ENCODE measurements at regions of chr1 and their contacts with region 1.

Region 1: GRCh38 chr1:43073490-43074230 is 98.4 kb downstream of the EBNA1BP2 start:
- DNase-seq: peak; percentile 35 to 86 (median 74)
- ATAC-seq: peak; percentile 89
- H3K4me3 ChIP-seq: no peak overlapping the region
- H3K4me3 Mint-ChIP-seq: no peak overlapping the region
- H3K27ac ChIP-seq: no peak overlapping the region
- H3K27ac Mint-ChIP-seq: no peak overlapping the region
- H3K4me1 ChIP-seq: peaks cover 3% of the 10 kb centered on the region
- H3K4me1 Mint-ChIP-seq: peaks cover 8% of the 10 kb centered on the region
- H3K27me3 ChIP-seq: no peaks in the 10 kb centered on the region
- H3K27me3 Mint-ChIP-seq: no peaks in the 10 kb centered on the region
- CTCF ChIP-seq: peak; percentile 85

Region 2: GRCh38 chr1:42576935-42577334 is 496.7 kb before region 1 on chr1:
- CTCF ChIA-PET with region 1: interaction called, 6 read pairs
- POLR2A ChIA-PET with region 1: no interaction called
- intact Hi-C with region 1: loop called in 1 of 2 experiments (anchors 1 kb)
- DNase-seq: no peak
- ATAC-seq: no peak
- H3K4me3 ChIP-seq: no peak overlapping the region
- H3K4me3 Mint-ChIP-seq: no peak overlapping the region
- H3K27ac ChIP-seq: no peak overlapping the region
- H3K27ac Mint-ChIP-seq: no peak overlapping the region
- H3K4me1 ChIP-seq: no peaks in the 10 kb centered on the region
- H3K4me1 Mint-ChIP-seq: no peaks in the 10 kb centered on the region
- H3K27me3 ChIP-seq: no peaks in the 10 kb centered on the region
- H3K27me3 Mint-ChIP-seq: no peaks in the 10 kb centered on the region
- CTCF ChIP-seq: no peak

Region 3: DNA sequence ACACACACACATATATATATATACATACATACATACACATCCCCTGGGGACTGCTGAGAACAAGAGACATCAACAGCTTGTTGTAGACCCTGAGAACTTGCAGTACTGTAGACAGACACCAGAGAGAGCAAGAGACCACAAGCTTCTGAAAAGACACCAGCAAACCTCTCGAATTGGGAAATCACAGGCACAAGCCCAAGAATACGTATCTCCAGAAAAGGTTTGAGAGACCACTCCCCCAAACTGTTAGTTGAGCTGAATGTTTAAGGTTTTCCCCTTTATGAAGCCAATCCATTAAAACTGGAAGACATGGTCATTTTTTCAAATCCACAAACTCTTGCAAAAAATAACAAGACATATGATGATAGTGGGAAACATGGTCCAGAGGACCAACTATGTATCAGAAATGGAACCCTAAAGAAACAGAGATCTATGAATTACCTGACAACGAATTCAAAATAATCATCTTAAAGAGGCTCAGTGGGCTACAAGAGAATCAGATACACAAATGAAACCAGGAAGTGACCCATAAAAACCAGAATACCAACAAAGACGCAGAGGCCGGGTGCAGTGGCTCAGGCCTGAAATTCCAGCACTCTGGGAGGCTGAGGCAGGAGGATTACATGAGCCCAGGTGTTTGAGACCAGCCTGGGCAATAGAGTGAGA is 160.1 kb before region 1 on chr1:
- CTCF ChIA-PET with region 1: interaction called, 784 read pairs
- POLR2A ChIA-PET with region 1: interaction called, 29 read pairs
- intact Hi-C with region 1: loop called (anchors 1 kb)
- DNase-seq: peak in 6 of 9 experiments; percentile 45 to 87 (median 64)
- ATAC-seq: peak; percentile 99
- H3K4me3 ChIP-seq: no peak overlapping the region
- H3K4me3 Mint-ChIP-seq: no peak overlapping the region
- H3K27ac ChIP-seq: no peak overlapping the region
- H3K27ac Mint-ChIP-seq: no peak overlapping the region
- H3K4me1 ChIP-seq: no peaks in the 10 kb centered on the region
- H3K4me1 Mint-ChIP-seq: peaks cover 4% of the 10 kb centered on the region
- H3K27me3 ChIP-seq: no peaks in the 10 kb centered on the region
- H3K27me3 Mint-ChIP-seq: peaks cover 3% of the 10 kb centered on the region
- CTCF ChIP-seq: peak; percentile 85

Region 4: DNA sequence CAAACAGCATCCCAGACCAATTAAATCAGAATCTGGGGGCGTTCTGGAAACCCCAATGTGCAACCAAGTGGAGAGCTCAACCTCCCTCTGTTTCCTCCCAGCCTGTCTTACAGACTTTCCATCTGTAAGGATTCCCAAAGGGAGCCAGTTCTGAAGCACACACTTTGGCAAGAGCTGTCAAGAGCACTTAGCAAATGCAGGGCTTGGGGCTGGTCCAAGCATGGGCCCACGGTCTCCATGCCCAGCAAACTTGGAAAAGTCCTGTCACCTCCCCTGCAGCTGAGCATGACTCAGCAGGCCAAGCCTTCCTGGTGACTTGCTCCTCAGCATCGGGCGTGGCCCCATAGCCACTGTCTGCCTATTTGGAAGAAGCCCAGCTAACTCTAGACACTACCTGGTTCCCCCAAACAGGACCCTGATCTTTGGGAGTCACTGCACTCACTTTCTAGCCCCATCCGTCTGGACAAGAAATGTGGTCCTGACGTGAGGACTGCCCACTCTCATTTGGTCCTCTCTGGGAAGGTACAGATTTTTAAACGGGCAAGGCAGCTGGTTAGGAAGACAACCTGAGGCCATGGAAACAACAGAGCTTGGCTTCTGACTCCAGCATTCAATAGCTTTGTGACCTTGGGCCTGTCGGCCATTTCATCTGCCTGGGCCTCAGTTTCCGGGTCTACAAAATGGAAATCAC is 131.9 kb before region 1 on chr1:
- CTCF ChIA-PET with region 1: interaction called, 16 read pairs
- POLR2A ChIA-PET with region 1: interaction called, 5 read pairs
- intact Hi-C with region 1: no loop called
- DNase-seq: no peak
- ATAC-seq: no peak
- H3K4me3 ChIP-seq: no peak overlapping the region
- H3K4me3 Mint-ChIP-seq: no peak overlapping the region
- H3K27ac ChIP-seq: peak overlapping the region in 1 of 2 experiments; percentile 69
- H3K27ac Mint-ChIP-seq: peak overlapping the region; percentile 86
- H3K4me1 ChIP-seq: peaks cover 78% of the 10 kb centered on the region
- H3K4me1 Mint-ChIP-seq: peaks cover 95% of the 10 kb centered on the region
- H3K27me3 ChIP-seq: no peaks in the 10 kb centered on the region
- H3K27me3 Mint-ChIP-seq: no peaks in the 10 kb centered on the region
- CTCF ChIP-seq: no peak

Region 5: DNA sequence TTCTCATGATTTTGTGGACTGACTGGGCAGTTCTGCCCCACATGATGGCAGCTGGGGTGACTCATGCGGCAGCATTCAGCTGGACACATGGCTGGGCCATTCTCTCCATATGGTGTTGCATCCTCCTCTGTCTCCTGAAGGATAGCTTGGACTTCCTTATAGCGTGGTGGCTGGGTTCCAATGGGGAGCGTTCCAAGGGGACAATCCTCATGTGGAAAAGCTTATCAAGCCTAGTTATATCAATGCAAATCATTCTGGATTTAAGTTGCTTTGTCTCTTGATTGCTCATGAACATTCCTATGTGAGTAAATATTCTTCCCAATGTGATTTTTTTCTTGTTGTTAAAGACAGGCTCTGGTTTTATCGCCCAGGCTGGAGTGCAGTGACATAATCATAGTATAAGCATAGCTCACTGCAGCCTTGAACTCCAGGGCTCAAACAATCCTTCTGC is 101.8 kb before region 1 on chr1:
- CTCF ChIA-PET with region 1: interaction called, 12 read pairs
- POLR2A ChIA-PET with region 1: no interaction called
- intact Hi-C with region 1: no loop called
- DNase-seq: no peak
- ATAC-seq: no peak
- H3K4me3 ChIP-seq: no peak overlapping the region
- H3K4me3 Mint-ChIP-seq: no peak overlapping the region
- H3K27ac ChIP-seq: no peak overlapping the region
- H3K27ac Mint-ChIP-seq: no peak overlapping the region
- H3K4me1 ChIP-seq: no peaks in the 10 kb centered on the region
- H3K4me1 Mint-ChIP-seq: no peaks in the 10 kb centered on the region
- H3K27me3 ChIP-seq: no peaks in the 10 kb centered on the region
- H3K27me3 Mint-ChIP-seq: no peaks in the 10 kb centered on the region
- CTCF ChIP-seq: no peak

Region 6: GRCh38 chr1:43098200-43098599 is 24.5 kb after region 1 on chr1:
- CTCF ChIA-PET with region 1: interaction called, 23 read pairs
- POLR2A ChIA-PET with region 1: no interaction called
- intact Hi-C with region 1: no loop called
- DNase-seq: no peak
- ATAC-seq: no peak
- H3K4me3 ChIP-seq: no peak overlapping the region
- H3K4me3 Mint-ChIP-seq: no peak overlapping the region
- H3K27ac ChIP-seq: no peak overlapping the region
- H3K27ac Mint-ChIP-seq: no peak overlapping the region
- H3K4me1 ChIP-seq: no peaks in the 10 kb centered on the region
- H3K4me1 Mint-ChIP-seq: no peaks in the 10 kb centered on the region
- H3K27me3 ChIP-seq: no peaks in the 10 kb centered on the region
- H3K27me3 Mint-ChIP-seq: peaks cover 7% of the 10 kb centered on the region
- CTCF ChIP-seq: no peak

Region 7: GRCh38 chr1:43367904-43368645 is 294.4 kb after region 1 on chr1 and contains the start of gene ELOVL1:
- CTCF ChIA-PET with region 1: no interaction called
- POLR2A ChIA-PET with region 1: no interaction called
- intact Hi-C with region 1: no loop called
- DNase-seq: peak; percentile 40 to 93 (median 85)
- ATAC-seq: peak; percentile 68
- H3K4me3 ChIP-seq: peak within 1 kb of the TSS; percentile 65 to 74
- H3K4me3 Mint-ChIP-seq: peak within 1 kb of the TSS; percentile 88
- H3K27ac ChIP-seq: peak within 1 kb of the TSS; percentile 63 to 78
- H3K27ac Mint-ChIP-seq: peak within 1 kb of the TSS; percentile 93
- H3K4me1 ChIP-seq: peaks cover 17% of the 10 kb centered on the region
- H3K4me1 Mint-ChIP-seq: peaks cover 42% of the 10 kb centered on the region
- H3K27me3 ChIP-seq: no peaks in the 10 kb centered on the region
- H3K27me3 Mint-ChIP-seq: no peaks in the 10 kb centered on the region
- CTCF ChIP-seq: no peak
- total RNA-seq, gene ELOVL1: 24.6 to 25.6 TPM